BJ (cell line): ENCODE measurements at regions of chr10 and their contacts with region 1.

Region 1: GRCh38 chr10:97572214-97572989 is at the start of gene ANKRD2:
- DNase-seq: no peak
- H3K4me3 ChIP-seq: no peak within 1 kb of the TSS
- H3K27me3 ChIP-seq: no peaks in the 10 kb centered on the region
- CTCF ChIP-seq: peak; percentile 95
- polyA plus RNA-seq, gene ANKRD2: 0.16 and 0.37 TPM in 2 replicates

Region 2: GRCh38 chr10:97584060-97584797 is 11.8 kb after region 1 on chr10 and contains the start of gene HOGA1:
- CTCF ChIA-PET with region 1: interaction called, 16 read pairs
- POLR2A ChIA-PET with region 1: no interaction called
- DNase-seq: no peak
- H3K4me3 ChIP-seq: no peak within 1 kb of the TSS
- H3K27me3 ChIP-seq: no peaks in the 10 kb centered on the region
- CTCF ChIP-seq: no peak
- polyA plus RNA-seq, gene HOGA1: 0.17 and 0.23 TPM in 2 replicates

Region 3: DNA sequence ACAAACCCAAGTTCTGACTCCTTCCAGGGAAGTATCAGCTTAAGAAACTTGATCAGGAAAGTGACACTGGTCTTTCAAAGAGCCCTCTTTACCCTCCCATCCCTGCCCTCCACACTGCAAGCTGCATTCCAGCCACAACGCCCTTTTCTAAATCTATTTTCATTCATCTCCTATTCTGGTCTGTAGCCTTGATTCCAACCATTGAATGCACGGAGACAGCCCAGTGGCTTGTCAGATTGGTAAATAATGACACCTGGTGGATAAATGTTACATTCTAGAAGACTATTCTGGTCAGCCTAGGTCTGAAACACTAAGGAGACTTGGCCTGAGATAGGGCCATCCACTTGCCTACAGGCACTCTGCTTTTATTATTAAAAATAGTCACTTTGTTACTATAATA is 40.0 kb after region 1 on chr10:
- CTCF ChIA-PET with region 1: interaction called, 179 read pairs
- POLR2A ChIA-PET with region 1: no interaction called
- DNase-seq: no peak
- H3K4me3 ChIP-seq: no peak overlapping the region
- H3K27me3 ChIP-seq: no peaks in the 10 kb centered on the region
- CTCF ChIP-seq: peak; percentile 36

Region 4: GRCh38 chr10:97701438-97702069 is 129.2 kb after region 1 on chr10:
- CTCF ChIA-PET with region 1: interaction called, 10 read pairs
- POLR2A ChIA-PET with region 1: no interaction called
- DNase-seq: no peak
- H3K4me3 ChIP-seq: no peak overlapping the region
- H3K27me3 ChIP-seq: no peaks in the 10 kb centered on the region; the same call in 1 of the 2 replicates
- CTCF ChIP-seq: peak; percentile 92

Region 5: GRCh38 chr10:97731346-97732051 is 159.1 kb after region 1 on chr10:
- CTCF ChIA-PET with region 1: interaction called, 16 read pairs
- POLR2A ChIA-PET with region 1: no interaction called
- DNase-seq: no peak
- H3K4me3 ChIP-seq: no peak overlapping the region
- H3K27me3 ChIP-seq: no peaks in the 10 kb centered on the region
- CTCF ChIP-seq: peak; percentile 82